ENCODE measurements at regions of chr1 and their contacts with region 1.

Region 1: DNA sequence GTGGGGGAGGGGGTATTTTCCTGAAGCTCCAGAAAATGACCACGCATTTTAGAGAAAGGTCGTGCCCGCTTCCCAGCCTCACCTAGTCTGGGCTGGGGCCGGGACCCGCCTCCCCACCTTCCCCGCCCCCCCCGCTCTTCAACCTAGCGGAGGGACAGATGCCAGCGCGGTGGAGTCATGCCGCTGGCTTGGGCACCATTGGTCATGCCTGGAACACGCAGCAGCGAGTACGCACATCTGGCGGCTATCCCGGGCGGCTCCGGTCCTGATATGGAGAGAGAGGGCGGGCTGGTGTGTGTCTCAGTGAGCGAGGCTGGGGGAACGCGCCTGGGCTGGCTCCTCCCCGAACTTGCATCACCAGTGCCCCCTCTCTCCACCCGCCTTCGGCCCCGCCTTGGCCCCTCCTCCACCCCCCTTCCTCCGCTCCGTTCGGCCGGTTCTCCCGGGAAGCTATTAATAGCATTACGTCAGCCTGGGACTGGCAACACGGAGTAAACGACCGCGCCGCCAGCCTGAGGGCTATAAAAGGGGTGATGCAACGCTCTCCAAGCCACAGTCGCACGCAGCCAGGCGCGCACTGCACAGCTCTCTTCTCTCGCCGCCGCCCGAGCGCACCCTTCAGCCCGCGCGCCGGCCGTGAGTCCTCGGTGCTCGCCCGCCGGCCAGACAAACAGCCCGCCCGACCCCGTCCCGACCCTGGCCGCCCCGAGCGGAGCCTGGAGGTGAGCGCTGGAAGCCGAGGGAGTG is at the start of gene ATF3:
- DNase-seq: peak; percentile 100
- ATAC-seq: peak; percentile 76
- H3K4me3 ChIP-seq: peak within 1 kb of the TSS; percentile 83
- H3K27ac ChIP-seq: peak within 1 kb of the TSS; percentile 56
- H3K4me1 ChIP-seq: peaks cover 37% of the 10 kb centered on the region
- H3K27me3 ChIP-seq: peaks cover 40% of the 10 kb centered on the region
- CTCF ChIP-seq: no peak
- total RNA-seq, gene ATF3: 275 and 335 TPM in 2 replicates

Region 2: GRCh38 chr1:212469701-212470458 is 138.5 kb before region 1 on chr1:
- CTCF ChIA-PET with region 1: interaction called, 4 read pairs
- POLR2A ChIA-PET with region 1: interaction called, 21 read pairs
- intact Hi-C with region 1: loop called (anchors 1 kb)
- DNase-seq: peak; percentile 99
- ATAC-seq: peak; percentile 99
- H3K4me3 ChIP-seq: no peak overlapping the region; the same call in 1 of the 2 replicates
- H3K27ac ChIP-seq: peak overlapping the region; percentile 80
- H3K4me1 ChIP-seq: peaks cover 17% of the 10 kb centered on the region
- H3K27me3 ChIP-seq: no peaks in the 10 kb centered on the region
- CTCF ChIP-seq: no peak

Region 3: GRCh38 chr1:212558693-212559480 is 49.5 kb before region 1 on chr1:
- CTCF ChIA-PET with region 1: interaction called, 6 read pairs
- POLR2A ChIA-PET with region 1: interaction called, 14 read pairs
- intact Hi-C with region 1: loop called (anchors 1 kb)
- DNase-seq: peak; percentile 99
- ATAC-seq: peak; percentile 69
- H3K4me3 ChIP-seq: peak overlapping the region; percentile 76
- H3K27ac ChIP-seq: peak overlapping the region; percentile 66
- H3K4me1 ChIP-seq: peaks cover 37% of the 10 kb centered on the region
- H3K27me3 ChIP-seq: no peaks in the 10 kb centered on the region
- CTCF ChIP-seq: peak; percentile 35; the same call in 1 of the 2 replicates

Region 4: DNA sequence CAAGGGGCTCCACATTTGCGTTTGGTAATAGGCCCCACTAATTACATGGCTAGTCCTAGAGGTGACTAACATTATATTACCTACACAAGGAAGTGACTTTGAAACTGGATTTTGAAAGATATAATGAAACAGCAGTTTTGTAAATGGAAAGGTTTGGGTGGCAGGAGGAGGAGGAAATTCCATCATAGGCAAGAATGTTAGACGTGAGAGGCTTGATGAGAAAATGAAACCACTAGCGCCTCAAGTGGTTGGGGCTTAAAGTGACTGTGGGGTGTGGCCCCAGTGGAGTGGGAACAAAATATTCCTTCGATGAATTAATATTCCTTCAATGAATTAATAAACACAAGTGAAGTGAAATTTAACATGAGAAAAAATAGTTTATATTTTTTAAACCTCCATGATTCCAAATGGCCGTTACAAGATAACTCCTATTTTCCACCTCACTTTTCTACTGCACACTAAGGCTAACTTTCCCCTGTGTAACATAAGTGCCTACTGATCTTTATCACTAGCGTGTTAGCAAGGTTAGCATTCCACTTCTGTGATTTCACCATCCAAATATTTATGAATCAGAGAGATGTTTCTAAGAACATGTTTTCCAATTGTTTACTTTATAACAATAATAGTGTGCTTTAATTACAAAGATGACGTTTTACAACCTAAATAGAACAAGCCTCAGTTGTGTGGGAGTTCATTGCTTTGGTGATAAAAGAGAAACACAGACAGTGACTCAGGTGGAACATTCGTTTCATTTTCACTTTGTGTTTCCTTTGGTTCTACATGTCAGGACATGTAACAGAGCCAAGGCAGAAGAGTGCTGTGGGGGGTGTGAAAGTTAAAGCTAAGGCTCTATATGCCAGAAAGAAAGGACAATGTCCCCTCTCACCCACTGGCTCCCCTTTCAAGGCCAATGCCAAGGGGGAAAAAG is 12.3 kb before region 1 on chr1:
- CTCF ChIA-PET with region 1: interaction called, 3 read pairs
- POLR2A ChIA-PET with region 1: interaction called, 47 read pairs
- intact Hi-C with region 1: loop called (anchors 1 kb)
- DNase-seq: peak; percentile 100
- ATAC-seq: peak; percentile 89
- H3K4me3 ChIP-seq: peak overlapping the region; percentile 46
- H3K27ac ChIP-seq: peak overlapping the region; percentile 80
- H3K4me1 ChIP-seq: peaks cover 45% of the 10 kb centered on the region
- H3K27me3 ChIP-seq: no peaks in the 10 kb centered on the region
- CTCF ChIP-seq: peak; percentile 99

Region 5: DNA sequence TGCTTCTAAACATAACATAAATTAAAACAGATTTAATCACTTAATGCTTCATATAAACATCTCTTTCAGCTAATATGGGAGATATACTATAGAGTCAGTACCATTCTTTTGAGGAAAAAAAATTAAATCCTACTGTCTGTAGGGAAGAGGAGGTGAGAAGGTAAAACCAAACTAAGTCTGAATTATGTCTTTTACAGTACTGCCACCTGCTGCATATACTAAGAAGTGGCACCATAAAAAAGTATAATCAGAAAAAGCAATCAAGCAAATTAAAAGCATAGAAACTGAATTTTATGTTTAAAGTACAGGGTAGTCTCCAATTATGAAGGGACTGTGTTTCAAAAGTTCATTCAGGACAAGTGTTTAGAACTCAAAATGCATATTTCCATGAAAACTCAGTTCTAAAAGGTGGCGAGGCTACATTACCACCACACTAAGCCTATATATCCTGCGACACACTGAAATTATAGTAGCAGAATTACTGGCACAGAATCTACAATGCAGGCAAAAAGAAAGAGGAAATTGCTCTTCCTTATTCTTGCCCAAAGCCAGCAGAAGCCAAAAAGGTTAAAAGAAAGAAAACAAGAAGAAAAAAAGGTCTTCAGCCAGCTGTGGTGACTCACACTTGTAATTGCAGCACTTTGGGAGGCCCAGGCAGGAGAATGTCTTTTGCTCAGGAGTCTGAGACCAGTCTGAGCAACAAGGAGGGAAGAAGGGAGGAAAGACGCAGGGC is 174.2 kb after region 1 on chr1:
- CTCF ChIA-PET with region 1: no interaction called
- POLR2A ChIA-PET with region 1: no interaction called
- intact Hi-C with region 1: loop called (anchors 5 kb)
- DNase-seq: peak; percentile 57
- ATAC-seq: peak; percentile 64
- H3K4me3 ChIP-seq: no peak overlapping the region
- H3K27ac ChIP-seq: no peak overlapping the region
- H3K4me1 ChIP-seq: no peaks in the 10 kb centered on the region
- H3K27me3 ChIP-seq: no peaks in the 10 kb centered on the region
- CTCF ChIP-seq: peak; percentile 91

Measured in PC-3 (cell line).